ENCODE measurements at regions of chr7 and their contacts with region 1.

Region 1: DNA sequence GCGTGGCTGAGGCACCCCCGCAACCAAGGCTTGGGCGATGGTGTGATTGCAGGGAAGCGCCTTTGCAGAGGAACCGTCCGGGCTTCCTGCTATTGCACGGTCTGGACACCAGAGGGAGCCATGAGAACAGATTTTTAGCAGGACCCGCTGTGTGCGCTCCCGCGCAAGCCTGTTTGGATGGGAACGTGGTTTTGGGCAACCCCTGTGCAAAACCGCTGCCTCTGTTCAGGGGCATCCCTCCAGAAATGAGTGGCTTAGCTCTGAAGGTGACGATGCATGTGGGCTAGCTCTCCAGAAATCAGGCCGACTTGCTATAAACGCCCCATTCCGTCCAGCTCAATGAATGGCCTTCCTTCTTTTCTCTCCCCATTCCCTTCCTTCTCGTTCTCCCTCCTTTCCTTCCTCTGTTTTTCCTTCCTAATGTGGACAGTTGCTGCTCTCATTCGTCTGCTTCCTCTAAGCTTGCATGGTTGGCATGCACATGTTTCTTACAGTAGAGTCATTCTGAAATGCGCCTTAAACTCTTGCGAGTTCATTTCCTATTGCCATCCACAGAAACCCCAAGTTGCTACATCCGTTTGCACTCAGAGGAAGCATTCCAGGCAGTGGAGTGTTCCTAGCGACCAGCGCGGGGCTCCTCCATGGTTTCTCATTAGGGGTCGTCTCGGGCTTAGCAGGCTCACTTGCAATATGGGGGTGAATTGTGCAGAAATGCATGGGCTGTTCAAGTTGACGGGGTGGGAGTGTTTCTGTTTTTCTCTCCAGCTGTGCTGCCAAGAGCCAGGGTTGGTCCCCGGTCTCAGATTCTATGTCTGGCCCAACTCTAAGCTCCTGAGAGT is 302.5 kb upstream of the GALNT17 start:
- DNase-seq: peak; percentile 72 to 78 (median 73)
- ATAC-seq: peak; percentile 96
- H3K4me3 ChIP-seq: no peak overlapping the region
- H3K27ac ChIP-seq: no peak overlapping the region
- H3K4me1 ChIP-seq: no peaks in the 10 kb centered on the region
- H3K27me3 ChIP-seq: peaks cover 0 to 8% of the 10 kb centered on the region in 2 experiments; a peak in 2 of 5 replicates
- CTCF ChIP-seq: peak; percentile 80 to 92 (median 88)
- EP300 ChIP-seq: no peak
- POLR2A ChIP-seq: no peak
- RAD21 ChIP-seq: peak; percentile 62 to 83

Region 2: GRCh38 chr7:71733107-71733870 is 903.8 kb after region 1 on chr7:
- CTCF ChIA-PET with region 1: interaction called, 21 read pairs
- POLR2A ChIA-PET with region 1: no interaction called
- in situ Hi-C with region 1: no loop called
- intact Hi-C with region 1: loop called (anchors 2 kb)
- DNase-seq: peak; percentile 83 to 88 (median 86)
- ATAC-seq: peak; percentile 94
- H3K4me3 ChIP-seq: no peak overlapping the region
- H3K27ac ChIP-seq: no peak overlapping the region
- H3K4me1 ChIP-seq: peaks cover 0 to 4% of the 10 kb centered on the region in 2 experiments; a peak in 1 of 5 replicates
- H3K27me3 ChIP-seq: no peaks in the 10 kb centered on the region; a peak in 1 of 5 replicates
- CTCF ChIP-seq: peak; percentile 85 to 92 (median 86)
- EP300 ChIP-seq: no peak
- POLR2A ChIP-seq: no peak
- RAD21 ChIP-seq: peak; percentile 82 to 90